ENCODE measurements at regions of chr1 and their contacts with region 1.

Region 1: GRCh38 chr1:200738740-200739498 is at the start of gene CAMSAP2:
- DNase-seq: peak; percentile 43 to 76 (median 69)
- ATAC-seq: peak; percentile 80
- H3K4me3 ChIP-seq: peak within 1 kb of the TSS; percentile 74
- H3K4me3 Mint-ChIP-seq: peak within 1 kb of the TSS; percentile 85 to 99 (median 98)
- H3K27ac ChIP-seq: peak within 1 kb of the TSS; percentile 75
- H3K27ac Mint-ChIP-seq: peak within 1 kb of the TSS; percentile 78 to 97 (median 93)
- H3K4me1 ChIP-seq: peaks cover 5 to 23% of the 10 kb centered on the region in 2 donors
- H3K4me1 Mint-ChIP-seq: peaks cover 16 to 49% (median 41%) of the 10 kb centered on the region in 7 donors
- H3K27me3 ChIP-seq: no peaks in the 10 kb centered on the region
- H3K27me3 Mint-ChIP-seq: peaks cover 0 to 45% (median 0%) of the 10 kb centered on the region in 5 donors
- total RNA-seq, gene CAMSAP2: 0.36 to 11.4 (median 5.5) TPM

Region 2: GRCh38 chr1:200771619-200772555 is 33.0 kb after region 1 on chr1:
- CTCF ChIA-PET with region 1: no interaction called
- POLR2A ChIA-PET with region 1: no interaction called
- intact Hi-C with region 1: loop called in 1 of 2 experiments (anchors 2 kb)
- DNase-seq: no peak
- ATAC-seq: no peak
- H3K4me3 ChIP-seq: no peak overlapping the region
- H3K4me3 Mint-ChIP-seq: no peak overlapping the region
- H3K27ac ChIP-seq: no peak overlapping the region
- H3K27ac Mint-ChIP-seq: no peak overlapping the region
- H3K4me1 ChIP-seq: no peaks in the 10 kb centered on the region
- H3K4me1 Mint-ChIP-seq: peaks cover 0 to 7% (median 0%) of the 10 kb centered on the region in 7 donors
- H3K27me3 ChIP-seq: no peaks in the 10 kb centered on the region
- H3K27me3 Mint-ChIP-seq: no peaks in the 10 kb centered on the region